Endothelial cell of umbilical vein (primary cell): ENCODE measurements at regions of chr3 and their contacts with region 1.

Region 1: DNA sequence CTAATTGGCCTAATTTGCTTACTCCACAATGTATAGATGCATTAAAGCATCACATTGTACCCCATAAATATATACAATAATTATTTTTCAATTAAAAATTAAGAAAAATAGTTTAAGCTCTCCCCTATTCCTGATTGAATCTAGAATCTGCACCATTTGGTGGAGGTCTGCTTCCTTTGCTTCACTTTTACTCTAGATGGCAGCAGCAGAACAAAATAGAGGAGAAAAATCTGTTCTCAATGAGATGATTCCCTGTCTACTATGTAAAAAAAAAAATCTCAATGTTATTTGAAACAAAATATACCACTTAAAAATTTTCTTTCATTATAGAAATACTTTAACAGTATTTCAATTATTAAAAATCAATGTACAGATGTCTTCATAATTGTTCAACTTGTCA is 109.6 kb upstream of the FXR1 start:
- DNase-seq: peak; percentile 25
- H3K4me3 ChIP-seq: no peak overlapping the region
- H3K27ac ChIP-seq: no peak overlapping the region
- H3K4me1 ChIP-seq: peaks cover 4% of the 10 kb centered on the region
- H3K27me3 ChIP-seq: no peaks in the 10 kb centered on the region
- CTCF ChIP-seq: peak; percentile 7 to 28
- POLR2A ChIP-seq: no peak

Region 2: DNA sequence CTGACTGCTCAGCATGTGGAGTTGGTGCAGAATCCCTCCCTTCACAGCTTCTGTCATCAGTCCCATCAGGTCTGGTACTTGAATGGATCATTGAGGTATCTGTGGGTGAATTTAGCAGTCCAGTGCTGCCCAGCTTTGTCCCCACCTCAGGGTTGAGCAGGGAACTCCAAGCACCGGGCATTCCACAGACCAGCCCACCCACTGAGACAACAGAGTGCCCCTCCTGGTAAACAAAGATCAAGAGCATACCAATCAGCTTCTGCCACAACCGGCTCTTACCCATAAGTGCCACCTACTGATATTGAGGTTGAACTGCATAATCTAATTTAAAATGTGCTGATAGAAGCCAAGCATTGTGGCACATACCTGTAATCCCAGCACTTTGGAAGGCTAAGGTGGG is 52.5 kb after region 1 on chr3:
- CTCF ChIA-PET with region 1: interaction called, 30 read pairs
- POLR2A ChIA-PET with region 1: no interaction called
- dilution Hi-C with region 1: no loop called
- intact Hi-C with region 1: loop called (anchors 2 kb)
- DNase-seq: peak; percentile 19
- H3K4me3 ChIP-seq: no peak overlapping the region
- H3K27ac ChIP-seq: no peak overlapping the region
- H3K4me1 ChIP-seq: no peaks in the 10 kb centered on the region
- H3K27me3 ChIP-seq: no peaks in the 10 kb centered on the region
- CTCF ChIP-seq: peak in 1 of 2 donors; percentile 30
- POLR2A ChIP-seq: no peak

Region 3: GRCh38 chr3:181176601-181177000 is 373.8 kb after region 1 on chr3:
- CTCF ChIA-PET with region 1: interaction called, 10 read pairs
- POLR2A ChIA-PET with region 1: no interaction called
- dilution Hi-C with region 1: no loop called
- intact Hi-C with region 1: loop called (anchors 1 kb)
- DNase-seq: peak; percentile 79
- H3K4me3 ChIP-seq: no peak overlapping the region
- H3K27ac ChIP-seq: no peak overlapping the region
- H3K4me1 ChIP-seq: no peaks in the 10 kb centered on the region
- H3K27me3 ChIP-seq: peaks cover 0 to 3% of the 10 kb centered on the region in 2 experiments
- CTCF ChIP-seq: peak; percentile 37 to 53
- POLR2A ChIP-seq: no peak

Region 4: DNA sequence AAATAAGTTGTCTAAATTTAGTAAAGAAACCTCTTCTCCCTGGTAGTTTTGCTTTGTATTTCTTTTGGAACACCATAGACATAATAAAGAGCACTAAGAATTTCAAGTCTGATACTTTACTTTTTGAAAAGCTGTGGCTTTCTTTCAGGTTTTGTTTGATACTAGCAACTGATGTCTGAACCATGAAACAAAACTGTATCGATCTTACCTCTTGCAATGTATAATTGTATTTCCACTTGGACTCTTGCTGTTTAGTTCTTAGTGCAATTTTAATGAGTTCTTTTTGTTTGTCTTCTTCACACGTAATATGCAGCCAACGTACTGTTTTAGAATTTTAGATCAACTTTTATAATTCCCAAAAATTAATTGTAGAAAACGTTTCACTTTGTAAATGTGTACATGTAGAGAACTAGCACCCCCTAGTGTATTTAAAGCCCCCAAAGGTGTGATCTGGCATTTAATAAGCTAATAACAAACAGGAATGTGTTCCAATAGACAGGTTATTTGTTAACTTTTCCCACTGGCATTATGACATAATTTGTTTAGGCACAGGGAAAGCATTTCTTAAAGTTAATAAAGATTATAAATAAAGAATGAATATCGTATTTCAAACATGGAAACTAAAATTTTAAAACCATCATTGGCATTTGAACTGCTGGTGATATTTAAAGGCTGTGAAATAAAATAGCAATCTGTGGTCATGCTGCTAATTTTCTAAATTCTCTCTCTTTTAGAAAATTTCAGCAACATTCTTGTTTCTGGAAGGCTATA is 475.8 kb after region 1 on chr3:
- CTCF ChIA-PET with region 1: interaction called, 12 read pairs
- POLR2A ChIA-PET with region 1: no interaction called
- dilution Hi-C with region 1: no loop called
- intact Hi-C with region 1: loop called (anchors 5 kb)
- DNase-seq: peak; percentile 6
- H3K4me3 ChIP-seq: no peak overlapping the region
- H3K27ac ChIP-seq: no peak overlapping the region
- H3K4me1 ChIP-seq: no peaks in the 10 kb centered on the region
- H3K27me3 ChIP-seq: peaks cover 0 to 4% of the 10 kb centered on the region in 2 experiments
- CTCF ChIP-seq: peak in 1 of 2 donors; percentile 7
- POLR2A ChIP-seq: no peak